GM12878 (cell line): ENCODE measurements at regions of chr5 and their contacts with region 1.

Region 1: DNA sequence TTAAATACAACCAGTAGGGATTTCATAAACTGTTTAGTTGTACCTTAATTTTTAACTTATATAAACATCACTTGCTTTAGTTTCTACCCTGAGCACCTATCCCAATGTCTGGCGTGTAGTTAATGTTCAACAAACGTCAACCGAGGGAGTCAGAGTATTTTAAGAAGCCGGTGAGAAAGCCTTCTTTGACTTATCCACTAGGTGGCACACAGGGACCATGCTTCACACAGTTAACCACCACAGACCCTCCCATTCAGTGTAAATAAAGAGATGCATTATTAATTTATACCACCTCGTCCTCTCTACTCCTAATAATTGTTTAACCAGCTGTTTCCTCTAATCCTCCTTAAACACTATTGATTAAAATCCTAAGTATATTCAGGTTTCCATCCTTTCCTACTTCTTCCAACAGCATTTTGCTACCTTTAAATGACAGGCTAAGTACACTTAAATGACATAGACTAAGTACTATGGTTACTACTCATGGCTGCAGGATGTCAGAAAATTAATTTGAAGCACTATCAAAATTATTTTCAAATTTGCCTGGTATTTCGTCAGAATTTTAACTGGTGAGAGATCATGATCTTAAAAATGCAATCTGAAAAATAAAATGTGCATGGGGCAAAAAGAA is 2.3 kb downstream of the HAPLN1 start:
- DNase-seq: no peak
- ATAC-seq: peak; percentile 87
- H3K4me3 ChIP-seq: no peak overlapping the region
- H3K27ac ChIP-seq: no peak overlapping the region
- H3K4me1 ChIP-seq: no peaks in the 10 kb centered on the region
- H3K27me3 ChIP-seq: peaks cover 2 to 10% of the 10 kb centered on the region in 2 experiments; a peak in 3 of 4 replicates
- CTCF ChIP-seq: peak; percentile 71 to 87 (median 72)
- EP300 ChIP-seq: no peak
- POLR2A ChIP-seq: no peak
- RAD21 ChIP-seq: peak; percentile 97

Region 2: DNA sequence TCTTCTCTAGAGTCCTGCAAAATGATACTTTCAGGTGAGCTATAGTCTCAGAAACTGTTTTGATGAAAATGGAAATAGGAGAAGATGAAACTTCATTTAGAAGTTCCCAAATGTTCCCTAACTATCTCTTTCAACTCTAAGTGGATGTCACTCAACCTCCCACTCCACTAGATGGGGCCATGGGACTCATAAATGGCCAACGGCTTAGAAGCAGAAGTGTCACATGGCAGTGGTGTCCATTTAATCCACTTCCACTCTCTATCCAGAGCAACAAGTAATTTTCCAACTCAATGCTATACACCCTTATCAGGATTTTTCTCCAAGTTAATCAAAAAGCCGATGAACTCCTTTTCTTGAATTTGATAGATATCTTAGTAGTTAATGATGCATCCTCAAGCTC is 370.7 kb after region 1 on chr5:
- CTCF ChIA-PET with region 1: interaction called, 4 read pairs
- POLR2A ChIA-PET with region 1: no interaction called
- RAD21 ChIA-PET with region 1: no interaction called
- SMC1A ChIA-PET with region 1: interaction called, 5 read pairs
- in situ Hi-C with region 1: no loop called
- intact Hi-C with region 1: loop called (anchors 2 kb)
- DNase-seq: no peak
- ATAC-seq: peak; percentile 71
- H3K4me3 ChIP-seq: no peak overlapping the region
- H3K27ac ChIP-seq: no peak overlapping the region
- H3K4me1 ChIP-seq: no peaks in the 10 kb centered on the region
- H3K27me3 ChIP-seq: no peaks in the 10 kb centered on the region
- CTCF ChIP-seq: peak; percentile 14 to 61 (median 37); a peak in 4 of 6 replicates
- EP300 ChIP-seq: no peak
- POLR2A ChIP-seq: no peak
- RAD21 ChIP-seq: peak; percentile 59

Region 3: GRCh38 chr5:84255315-84255714 is 537.0 kb after region 1 on chr5:
- CTCF ChIA-PET with region 1: interaction called, 9 read pairs
- POLR2A ChIA-PET with region 1: no interaction called
- RAD21 ChIA-PET with region 1: no interaction called
- SMC1A ChIA-PET with region 1: no interaction called
- in situ Hi-C with region 1: loop called (anchors 25 kb)
- intact Hi-C with region 1: loop called (anchors 5 kb)
- DNase-seq: no peak
- ATAC-seq: peak; percentile 70
- H3K4me3 ChIP-seq: no peak overlapping the region
- H3K27ac ChIP-seq: no peak overlapping the region
- H3K4me1 ChIP-seq: no peaks in the 10 kb centered on the region
- H3K27me3 ChIP-seq: no peaks in the 10 kb centered on the region
- CTCF ChIP-seq: peak in 2 of 3 experiments; percentile 6 to 27; a peak in 2 of 6 replicates
- EP300 ChIP-seq: no peak
- POLR2A ChIP-seq: no peak
- RAD21 ChIP-seq: peak; percentile 24; the same call in 1 of the 2 replicates

Region 4: GRCh38 chr5:84274585-84275468 is 556.5 kb after region 1 on chr5:
- CTCF ChIA-PET with region 1: interaction called, 4 read pairs
- POLR2A ChIA-PET with region 1: no interaction called
- RAD21 ChIA-PET with region 1: no interaction called
- SMC1A ChIA-PET with region 1: no interaction called
- in situ Hi-C with region 1: loop called (anchors 25 kb)
- intact Hi-C with region 1: no loop called
- DNase-seq: no peak
- ATAC-seq: peak; percentile 63
- H3K4me3 ChIP-seq: no peak overlapping the region
- H3K27ac ChIP-seq: no peak overlapping the region
- H3K4me1 ChIP-seq: no peaks in the 10 kb centered on the region
- H3K27me3 ChIP-seq: no peaks in the 10 kb centered on the region
- CTCF ChIP-seq: peak; percentile 46 to 55 (median 53); a peak in 5 of 6 replicates
- EP300 ChIP-seq: no peak
- POLR2A ChIP-seq: no peak
- RAD21 ChIP-seq: peak; percentile 56

Region 5: GRCh38 chr5:85049020-85049419 is 1330.7 kb after region 1 on chr5:
- CTCF ChIA-PET with region 1: interaction called, 4 read pairs
- POLR2A ChIA-PET with region 1: no interaction called
- RAD21 ChIA-PET with region 1: no interaction called
- SMC1A ChIA-PET with region 1: interaction called, 4 read pairs
- in situ Hi-C with region 1: loop called (anchors 10 kb)
- intact Hi-C with region 1: loop called (anchors 1 kb)
- DNase-seq: no peak
- ATAC-seq: peak; percentile 91
- H3K4me3 ChIP-seq: no peak overlapping the region
- H3K27ac ChIP-seq: no peak overlapping the region
- H3K4me1 ChIP-seq: no peaks in the 10 kb centered on the region
- H3K27me3 ChIP-seq: no peaks in the 10 kb centered on the region
- CTCF ChIP-seq: peak in 2 of 3 experiments; percentile 36 to 48; a peak in 2 of 6 replicates
- EP300 ChIP-seq: no peak
- POLR2A ChIP-seq: no peak
- RAD21 ChIP-seq: peak; percentile 28; the same call in 1 of the 2 replicates